CD8-positive, alpha-beta T cell (primary cell): ENCODE measurements at regions of chr7 and their contacts with region 1.

Region 1: GRCh38 chr7:84043661-84044191 is 150.9 kb downstream of the SEMA3A start:
- DNase-seq: no peak
- ATAC-seq: no peak
- H3K4me3 ChIP-seq: no peak overlapping the region
- H3K4me3 Mint-ChIP-seq: no peak overlapping the region
- H3K27ac ChIP-seq: no peak overlapping the region
- H3K27ac Mint-ChIP-seq: no peak overlapping the region
- H3K4me1 ChIP-seq: no peaks in the 10 kb centered on the region
- H3K4me1 Mint-ChIP-seq: no peaks in the 10 kb centered on the region
- H3K27me3 ChIP-seq: no peaks in the 10 kb centered on the region
- H3K27me3 Mint-ChIP-seq: no peaks in the 10 kb centered on the region
- CTCF ChIP-seq: no peak

Region 2: DNA sequence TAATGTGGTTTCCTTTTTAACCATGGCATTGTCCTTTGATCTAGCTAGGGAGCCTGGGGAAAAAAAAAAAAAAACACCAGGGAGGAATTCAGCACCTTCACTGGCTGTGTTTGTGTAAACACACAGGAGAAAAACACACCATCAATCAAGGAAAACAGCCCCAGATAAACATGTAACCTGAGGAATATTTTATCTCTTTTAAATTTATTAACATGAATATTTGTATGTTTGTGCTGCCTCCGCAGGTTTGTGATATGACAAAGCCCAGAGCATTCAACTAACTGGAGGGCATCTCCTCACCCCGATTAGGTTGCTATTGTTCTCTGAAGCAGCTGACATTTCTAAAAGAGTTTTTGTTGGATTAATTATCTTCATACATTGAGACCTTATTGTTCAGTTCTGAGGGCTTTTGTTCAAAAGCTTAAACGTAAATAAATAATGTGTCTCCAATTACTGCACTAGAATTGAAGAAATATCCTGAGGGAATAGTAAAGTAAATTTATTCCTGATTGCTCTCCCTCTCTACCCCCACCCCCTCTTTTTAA is 305.4 kb before region 1 on chr7:
- CTCF ChIA-PET with region 1: no interaction called
- POLR2A ChIA-PET with region 1: no interaction called
- intact Hi-C with region 1: no loop called
- DNase-seq: no peak
- ATAC-seq: no peak
- H3K4me3 ChIP-seq: no peak overlapping the region
- H3K4me3 Mint-ChIP-seq: no peak overlapping the region
- H3K27ac ChIP-seq: no peak overlapping the region
- H3K27ac Mint-ChIP-seq: no peak overlapping the region
- H3K4me1 ChIP-seq: no peaks in the 10 kb centered on the region
- H3K4me1 Mint-ChIP-seq: no peaks in the 10 kb centered on the region
- H3K27me3 ChIP-seq: no peaks in the 10 kb centered on the region
- H3K27me3 Mint-ChIP-seq: no peaks in the 10 kb centered on the region
- CTCF ChIP-seq: no peak

Region 3: DNA sequence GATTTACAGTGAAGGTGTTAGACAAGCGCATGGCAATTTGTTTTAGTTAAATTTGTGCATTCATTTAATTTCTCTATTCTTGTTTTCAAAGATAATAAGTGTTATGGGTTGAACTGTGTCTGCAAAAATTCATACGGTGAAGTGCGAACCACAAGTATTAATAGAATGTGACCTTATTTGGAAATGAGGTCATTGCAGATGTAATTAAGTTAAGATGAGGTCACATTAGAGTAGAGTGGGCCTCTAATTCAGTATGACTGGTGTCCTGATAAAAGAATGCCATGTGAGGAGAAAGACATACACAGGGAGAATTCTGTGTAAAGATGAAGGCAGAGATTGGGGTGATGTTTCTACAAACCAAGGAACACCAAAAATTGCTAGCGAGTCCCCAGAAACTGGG is 236.0 kb before region 1 on chr7:
- CTCF ChIA-PET with region 1: no interaction called
- POLR2A ChIA-PET with region 1: no interaction called
- intact Hi-C with region 1: no loop called
- DNase-seq: no peak
- ATAC-seq: no peak
- H3K4me3 ChIP-seq: no peak overlapping the region
- H3K4me3 Mint-ChIP-seq: no peak overlapping the region
- H3K27ac ChIP-seq: no peak overlapping the region
- H3K27ac Mint-ChIP-seq: no peak overlapping the region
- H3K4me1 ChIP-seq: no peaks in the 10 kb centered on the region
- H3K4me1 Mint-ChIP-seq: no peaks in the 10 kb centered on the region
- H3K27me3 ChIP-seq: no peaks in the 10 kb centered on the region
- H3K27me3 Mint-ChIP-seq: no peaks in the 10 kb centered on the region
- CTCF ChIP-seq: no peak

Region 4: DNA sequence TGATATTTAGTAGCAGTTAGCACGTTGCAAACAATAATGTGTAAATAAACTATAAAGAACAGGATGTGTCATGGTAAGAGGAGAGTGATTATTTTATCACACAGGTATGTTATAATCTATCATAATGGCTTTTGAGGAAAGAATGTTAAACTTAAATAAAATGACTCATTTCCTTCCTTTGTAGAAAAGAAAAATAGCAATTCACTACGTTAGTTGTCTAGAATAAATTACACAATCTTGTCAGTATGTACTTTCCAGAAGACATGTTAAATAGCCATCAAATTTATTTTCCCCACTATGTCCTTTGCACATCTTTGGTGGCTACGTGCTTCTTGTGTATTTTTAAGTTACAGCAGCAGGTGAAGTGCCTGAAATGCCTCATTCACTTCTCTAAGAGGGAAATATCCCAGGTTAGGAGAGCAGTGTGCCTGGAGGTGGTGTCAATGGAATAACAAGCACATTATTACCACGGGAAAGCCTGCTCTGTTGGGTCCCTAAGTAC is 17.1 kb after region 1 on chr7:
- CTCF ChIA-PET with region 1: no interaction called
- POLR2A ChIA-PET with region 1: no interaction called
- intact Hi-C with region 1: loop called in 1 of 2 experiments (anchors 1 kb)
- DNase-seq: no peak
- ATAC-seq: no peak
- H3K4me3 ChIP-seq: no peak overlapping the region
- H3K4me3 Mint-ChIP-seq: no peak overlapping the region
- H3K27ac ChIP-seq: no peak overlapping the region
- H3K27ac Mint-ChIP-seq: no peak overlapping the region
- H3K4me1 ChIP-seq: no peaks in the 10 kb centered on the region
- H3K4me1 Mint-ChIP-seq: peaks cover 8% of the 10 kb centered on the region
- H3K27me3 ChIP-seq: no peaks in the 10 kb centered on the region
- H3K27me3 Mint-ChIP-seq: no peaks in the 10 kb centered on the region
- CTCF ChIP-seq: no peak